Breast epithelium (tissue), 4 donors: ENCODE measurements at regions of chr11 and their contacts with region 1.

Region 1: GRCh38 chr11:859509-860131 is 17.0 kb downstream of the TSPAN4 start:
- DNase-seq: peak in 1 of 2 donors; percentile 80
- H3K4me3 ChIP-seq: peak overlapping the region in 2 of 3 donors; percentile 26 to 50
- H3K27ac ChIP-seq: peak overlapping the region in 1 of 2 donors; percentile 55
- H3K4me1 ChIP-seq: peaks cover 0 to 4% of the 10 kb centered on the region in 2 donors
- H3K27me3 ChIP-seq: no peaks in the 10 kb centered on the region
- CTCF ChIP-seq: no peak
- POLR2A ChIP-seq: no peak

Region 2: DNA sequence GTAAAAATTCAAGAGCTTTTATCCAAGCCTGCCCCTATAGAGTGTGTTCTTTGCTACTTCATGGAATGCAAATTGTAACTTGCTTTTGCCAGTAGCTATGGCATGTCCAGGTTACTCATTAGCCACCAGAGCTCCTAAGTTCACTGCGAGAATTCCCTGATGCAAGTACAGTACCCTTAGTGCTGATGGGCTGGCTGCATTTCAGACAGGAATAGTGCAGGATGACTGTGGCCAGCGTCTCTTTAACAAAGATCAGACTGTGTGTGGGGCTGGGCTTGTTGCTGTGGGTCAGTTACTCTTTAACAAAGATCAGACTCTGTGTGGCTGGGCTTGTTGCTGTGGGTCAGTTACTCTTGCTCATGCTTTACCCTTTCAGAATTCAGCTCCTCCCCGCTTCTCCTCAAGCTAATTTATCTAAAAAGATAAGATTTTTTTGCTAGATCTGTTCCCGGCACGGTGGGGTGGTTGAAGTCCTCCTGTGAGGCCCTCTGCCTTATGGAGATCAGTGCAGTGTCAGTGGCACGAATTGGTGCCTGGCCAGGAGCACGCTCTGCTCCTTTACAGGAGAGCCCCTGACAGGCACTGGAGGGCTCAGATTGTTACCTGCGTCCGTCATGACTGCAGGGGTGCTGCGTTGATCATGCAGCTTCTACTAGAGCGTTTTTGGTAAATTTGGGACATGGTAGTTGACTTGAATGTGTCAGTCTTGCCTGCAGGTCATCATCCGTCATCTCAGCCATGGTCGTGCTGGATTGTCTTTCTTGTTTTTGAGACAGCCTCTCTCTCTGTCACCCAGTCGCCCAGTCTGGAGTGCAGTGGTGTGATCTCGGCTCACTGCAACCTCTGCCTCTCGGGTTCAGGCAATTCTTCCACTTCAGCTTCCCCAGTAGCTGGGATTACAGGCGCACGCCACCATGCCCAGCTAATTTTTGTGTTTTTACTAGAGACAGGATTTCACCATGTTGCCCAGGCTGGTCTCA is 93.1 kb after region 1 on chr11:
- intact Hi-C with region 1: no loop called
- DNase-seq: no peak
- H3K4me3 ChIP-seq: no peak overlapping the region
- H3K27ac ChIP-seq: no peak overlapping the region
- H3K4me1 ChIP-seq: peaks cover 0 to 13% of the 10 kb centered on the region in 2 donors
- H3K27me3 ChIP-seq: no peaks in the 10 kb centered on the region
- CTCF ChIP-seq: no peak
- POLR2A ChIP-seq: no peak

Region 3: DNA sequence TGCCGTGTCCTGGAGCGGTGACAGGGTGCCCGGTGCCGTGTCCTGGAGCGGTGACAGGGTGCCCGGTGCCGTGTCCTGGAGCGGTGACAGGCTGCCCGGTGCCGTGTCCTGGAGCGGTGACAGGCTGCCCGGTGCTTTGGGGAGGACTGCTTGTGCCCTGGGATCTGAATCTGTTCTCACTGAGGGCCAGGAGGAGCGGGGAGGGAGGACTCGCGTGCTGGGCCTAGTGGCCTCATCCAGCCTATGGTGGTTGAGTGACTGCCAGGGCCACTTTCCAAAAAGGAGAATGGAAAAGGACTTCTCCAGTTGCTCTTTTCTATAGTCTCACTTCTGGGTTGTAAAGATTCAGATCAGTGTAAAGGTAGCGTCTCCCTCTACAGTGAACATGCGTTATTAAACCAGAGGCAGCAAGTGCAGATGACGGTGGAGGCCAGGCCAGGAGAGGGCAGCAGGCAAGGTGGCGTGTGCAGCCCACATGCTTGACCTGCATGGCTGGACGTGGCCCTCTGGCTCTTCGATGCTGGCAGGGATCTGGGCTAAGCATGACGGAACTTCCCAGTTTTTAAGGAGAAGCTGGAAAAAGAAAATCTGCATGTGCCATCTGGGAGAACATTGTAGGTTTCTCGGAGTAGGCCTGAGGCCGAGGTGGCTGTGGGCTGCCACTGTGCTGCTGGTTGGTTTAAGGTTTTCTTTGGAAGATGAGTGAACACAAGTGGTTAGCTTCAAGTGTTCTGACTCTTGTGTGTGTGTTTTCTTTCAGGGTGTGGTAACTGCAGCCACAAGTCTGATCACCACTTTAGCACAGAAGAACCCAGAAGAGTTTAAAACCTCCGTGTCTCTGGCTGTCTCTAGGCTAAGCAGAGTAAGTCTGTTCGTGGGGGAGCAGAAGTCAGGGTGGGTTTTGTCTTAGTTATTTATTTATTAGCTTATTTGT is 121.1 kb after region 1 on chr11:
- intact Hi-C with region 1: loop called (anchors 10 kb)
- DNase-seq: no peak
- H3K4me3 ChIP-seq: no peak overlapping the region
- H3K27ac ChIP-seq: no peak overlapping the region
- H3K4me1 ChIP-seq: peaks cover 0 to 11% of the 10 kb centered on the region in 2 donors
- H3K27me3 ChIP-seq: no peaks in the 10 kb centered on the region
- CTCF ChIP-seq: no peak
- POLR2A ChIP-seq: no peak

Region 4: DNA sequence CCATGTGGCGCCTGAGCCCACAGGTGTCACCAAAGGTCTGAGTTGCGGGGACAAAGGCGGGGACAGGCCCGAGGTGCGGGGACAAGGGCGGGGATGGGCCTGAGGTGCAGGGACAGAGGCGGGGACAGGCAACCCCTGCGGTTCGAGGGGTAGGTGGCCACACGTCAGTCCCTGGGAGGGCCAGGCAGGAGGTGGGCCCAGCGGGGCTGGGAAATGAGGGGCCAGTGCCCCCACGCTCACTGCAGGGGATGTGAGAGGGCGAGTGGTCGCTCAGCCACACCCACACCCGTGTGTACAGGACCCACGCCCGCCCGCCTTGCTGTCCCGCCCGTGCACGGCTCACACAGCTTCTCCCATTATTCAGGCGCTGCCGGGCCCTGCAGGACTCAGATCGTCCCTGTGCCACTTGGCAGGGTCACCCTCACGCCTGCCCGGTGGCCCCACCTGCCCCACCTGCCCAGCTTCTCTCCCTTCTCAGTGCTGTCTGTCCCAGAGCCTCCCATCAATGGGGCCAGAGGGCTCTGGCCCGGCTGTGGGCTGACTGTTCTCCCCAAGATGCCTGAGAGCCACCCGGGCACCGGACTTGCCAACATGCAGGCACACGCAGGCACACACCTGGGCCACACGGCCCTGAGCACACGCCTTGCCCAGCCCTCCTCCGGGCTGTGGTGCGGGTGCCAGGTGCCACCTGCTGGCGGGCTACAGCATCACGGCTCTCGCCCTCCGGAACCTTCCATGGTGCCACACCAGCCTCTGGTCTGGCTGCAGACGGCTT is 191.1 kb after region 1 on chr11:
- intact Hi-C with region 1: loop called (anchors 10 kb)
- DNase-seq: peak; percentile 63 to 82
- H3K4me3 ChIP-seq: no peak overlapping the region
- H3K27ac ChIP-seq: no peak overlapping the region
- H3K4me1 ChIP-seq: peaks cover 0 to 4% of the 10 kb centered on the region in 2 donors
- H3K27me3 ChIP-seq: peaks cover 0 to 20% of the 10 kb centered on the region in 2 donors
- CTCF ChIP-seq: peak; percentile 83 to 97 (median 92)
- POLR2A ChIP-seq: no peak